CD4-positive, alpha-beta T cell (primary cell): ENCODE measurements at regions of chr2 and their contacts with region 1.

Region 1: GRCh38 chr2:181430406-181431118 is 26.6 kb upstream of the ITGA4 start:
- DNase-seq: peak in 3 of 14 experiments; percentile 63 to 69 (median 64)
- ATAC-seq: peak; percentile 61
- H3K4me3 ChIP-seq: no peak overlapping the region
- H3K4me3 Mint-ChIP-seq: no peak overlapping the region
- H3K27ac ChIP-seq: no peak overlapping the region
- H3K27ac Mint-ChIP-seq: no peak overlapping the region
- H3K4me1 ChIP-seq: peaks cover 9% of the 10 kb centered on the region
- H3K4me1 Mint-ChIP-seq: peaks cover 14% of the 10 kb centered on the region
- H3K27me3 ChIP-seq: no peaks in the 10 kb centered on the region
- H3K27me3 Mint-ChIP-seq: no peaks in the 10 kb centered on the region
- CTCF ChIP-seq: peak; percentile 29

Region 2: GRCh38 chr2:181466661-181467576 is 36.4 kb after region 1 on chr2:
- CTCF ChIA-PET with region 1: interaction called, 3 read pairs
- POLR2A ChIA-PET with region 1: no interaction called
- intact Hi-C with region 1: loop called in 1 of 2 experiments (anchors 5 kb)
- DNase-seq: peak; percentile 63 to 89 (median 74)
- ATAC-seq: peak; percentile 65
- H3K4me3 ChIP-seq: no peak overlapping the region
- H3K4me3 Mint-ChIP-seq: peak overlapping the region; percentile 69
- H3K27ac ChIP-seq: peak overlapping the region; percentile 23 to 35
- H3K27ac Mint-ChIP-seq: peak overlapping the region; percentile 84
- H3K4me1 ChIP-seq: peaks cover 33% of the 10 kb centered on the region
- H3K4me1 Mint-ChIP-seq: peaks cover 89% of the 10 kb centered on the region
- H3K27me3 ChIP-seq: no peaks in the 10 kb centered on the region
- H3K27me3 Mint-ChIP-seq: no peaks in the 10 kb centered on the region
- CTCF ChIP-seq: peak; percentile 94